Panc1 (cell line): ENCODE measurements at regions of chr16 and their contacts with region 1.

Region 1: DNA sequence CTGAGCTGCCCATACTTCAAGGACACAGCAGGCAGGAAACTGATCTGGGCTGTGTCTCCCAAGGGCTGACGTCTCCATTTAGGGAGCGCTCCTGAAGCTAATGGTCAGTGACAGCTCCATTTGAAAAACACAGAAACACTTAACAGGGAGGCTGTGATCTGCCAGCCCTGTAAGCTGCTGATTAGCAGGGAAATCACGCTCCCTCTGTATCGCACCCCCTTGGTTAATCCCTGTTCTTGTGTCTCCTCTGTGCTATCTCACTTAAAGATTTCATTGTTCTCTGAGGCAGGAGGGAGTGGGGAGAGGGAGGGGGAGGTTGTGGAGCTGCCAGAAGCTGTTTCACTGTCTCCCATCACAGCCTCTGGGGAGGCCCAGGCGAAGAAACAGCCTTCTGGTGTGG is 47.4 kb upstream of the CACNG3 start:
- DNase-seq: no peak
- ATAC-seq: no peak
- H3K4me3 ChIP-seq: no peak overlapping the region
- H3K27ac ChIP-seq: no peak overlapping the region
- H3K4me1 ChIP-seq: no peaks in the 10 kb centered on the region
- H3K27me3 ChIP-seq: peaks cover 13% of the 10 kb centered on the region
- CTCF ChIP-seq: no peak

Region 2: DNA sequence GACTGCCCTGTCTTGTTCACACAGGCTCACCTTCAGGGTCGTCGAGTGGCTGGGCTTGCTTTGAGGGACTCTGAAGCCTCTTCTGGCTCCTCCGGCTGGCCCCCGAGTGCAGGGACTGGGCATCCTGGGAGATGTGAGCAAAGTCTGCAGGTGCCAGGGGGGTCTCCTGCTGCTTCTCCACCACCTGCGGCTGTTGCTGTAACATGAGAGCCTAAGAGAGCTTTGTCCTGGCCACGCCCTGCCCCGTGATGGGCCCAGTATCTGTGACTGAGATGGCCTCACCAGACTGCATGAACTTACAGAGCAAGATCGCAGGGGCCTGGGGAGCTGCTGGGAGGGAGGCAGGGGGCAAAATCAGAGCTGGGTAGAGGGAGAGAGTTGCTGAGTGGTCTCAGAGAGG is 508.2 kb before region 1 on chr16:
- CTCF ChIA-PET with region 1: interaction called, 12 read pairs
- POLR2A ChIA-PET with region 1: no interaction called
- in situ Hi-C with region 1: no loop called
- intact Hi-C with region 1: no loop called
- DNase-seq: no peak
- ATAC-seq: no peak
- H3K4me3 ChIP-seq: no peak overlapping the region
- H3K27ac ChIP-seq: no peak overlapping the region
- H3K4me1 ChIP-seq: no peaks in the 10 kb centered on the region
- H3K27me3 ChIP-seq: no peaks in the 10 kb centered on the region
- CTCF ChIP-seq: no peak

Region 3: GRCh38 chr16:24452724-24453123 is 244.0 kb after region 1 on chr16:
- CTCF ChIA-PET with region 1: interaction called, 12 read pairs
- POLR2A ChIA-PET with region 1: no interaction called
- in situ Hi-C with region 1: no loop called
- intact Hi-C with region 1: no loop called
- DNase-seq: no peak
- ATAC-seq: no peak
- H3K4me3 ChIP-seq: no peak overlapping the region
- H3K27ac ChIP-seq: no peak overlapping the region
- H3K4me1 ChIP-seq: no peaks in the 10 kb centered on the region
- H3K27me3 ChIP-seq: no peaks in the 10 kb centered on the region
- CTCF ChIP-seq: no peak